ENCODE measurements at regions of chrX and their contacts with region 1.

Region 1: DNA sequence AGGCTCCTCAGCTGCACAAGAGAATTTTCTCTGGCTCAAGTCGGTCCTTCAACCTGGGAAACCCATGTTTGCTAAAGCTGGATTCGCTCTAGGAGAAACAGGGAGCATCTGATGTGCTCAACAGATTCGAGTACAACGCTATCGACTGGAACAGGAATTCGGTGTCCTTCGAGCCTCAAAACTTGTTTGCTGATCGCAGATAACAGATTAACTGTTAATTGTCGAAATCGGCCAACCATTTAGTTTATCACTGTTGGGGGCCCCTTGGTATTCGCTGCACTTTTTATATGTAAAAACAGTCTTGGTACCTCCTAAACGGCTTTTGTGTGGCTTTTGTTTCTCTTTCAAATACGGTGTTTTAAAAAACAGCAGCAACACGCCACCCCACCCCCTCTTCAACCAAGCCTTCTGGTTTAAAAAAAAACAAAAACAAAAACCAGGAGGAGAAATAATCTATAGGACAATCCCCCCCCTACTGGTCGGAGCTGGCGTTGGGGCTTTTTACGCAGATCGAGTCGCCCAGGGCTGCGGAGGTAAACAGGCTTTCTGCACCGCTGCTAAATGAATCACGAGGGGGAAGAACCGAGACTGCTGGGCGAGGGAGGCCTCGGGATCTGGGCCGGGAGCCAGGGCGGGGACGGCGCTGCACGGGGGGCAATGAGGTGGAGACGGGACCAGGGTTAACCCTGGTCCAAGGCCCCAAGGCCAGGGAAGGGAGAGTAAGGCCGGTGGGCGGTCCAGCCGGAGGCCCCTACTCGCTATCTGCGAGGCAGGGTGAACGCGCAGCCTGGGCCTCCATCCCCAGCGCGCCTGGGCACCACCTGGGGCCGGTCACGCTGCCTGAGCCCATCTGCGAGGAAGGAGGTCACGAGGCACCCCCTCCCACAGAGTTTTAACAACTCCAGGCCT is 71.7 kb upstream of the BCOR start:
- DNase-seq: peak; percentile 93
- H3K4me3 Mint-ChIP-seq: peak overlapping the region; percentile 93
- H3K27ac Mint-ChIP-seq: peak overlapping the region; percentile 93
- H3K4me1 Mint-ChIP-seq: peaks cover 44% of the 10 kb centered on the region
- H3K27me3 Mint-ChIP-seq: peaks cover under 1% of the 10 kb centered on the region

Region 2: GRCh38 chrX:39261446-39262147 is 907.9 kb before region 1 on chrX:
- intact Hi-C with region 1: loop called (anchors 10 kb)
- DNase-seq: peak; percentile 74
- H3K4me3 Mint-ChIP-seq: no peak overlapping the region
- H3K27ac Mint-ChIP-seq: peak overlapping the region; percentile 78
- H3K4me1 Mint-ChIP-seq: peaks cover 34% of the 10 kb centered on the region
- H3K27me3 Mint-ChIP-seq: no peaks in the 10 kb centered on the region

Region 3: GRCh38 chrX:39730662-39731397 is 438.6 kb before region 1 on chrX:
- intact Hi-C with region 1: loop called (anchors 5 kb)
- DNase-seq: peak; percentile 85
- H3K4me3 Mint-ChIP-seq: peak overlapping the region; percentile 28
- H3K27ac Mint-ChIP-seq: peak overlapping the region; percentile 74
- H3K4me1 Mint-ChIP-seq: peaks cover 19% of the 10 kb centered on the region
- H3K27me3 Mint-ChIP-seq: no peaks in the 10 kb centered on the region

Region 4: DNA sequence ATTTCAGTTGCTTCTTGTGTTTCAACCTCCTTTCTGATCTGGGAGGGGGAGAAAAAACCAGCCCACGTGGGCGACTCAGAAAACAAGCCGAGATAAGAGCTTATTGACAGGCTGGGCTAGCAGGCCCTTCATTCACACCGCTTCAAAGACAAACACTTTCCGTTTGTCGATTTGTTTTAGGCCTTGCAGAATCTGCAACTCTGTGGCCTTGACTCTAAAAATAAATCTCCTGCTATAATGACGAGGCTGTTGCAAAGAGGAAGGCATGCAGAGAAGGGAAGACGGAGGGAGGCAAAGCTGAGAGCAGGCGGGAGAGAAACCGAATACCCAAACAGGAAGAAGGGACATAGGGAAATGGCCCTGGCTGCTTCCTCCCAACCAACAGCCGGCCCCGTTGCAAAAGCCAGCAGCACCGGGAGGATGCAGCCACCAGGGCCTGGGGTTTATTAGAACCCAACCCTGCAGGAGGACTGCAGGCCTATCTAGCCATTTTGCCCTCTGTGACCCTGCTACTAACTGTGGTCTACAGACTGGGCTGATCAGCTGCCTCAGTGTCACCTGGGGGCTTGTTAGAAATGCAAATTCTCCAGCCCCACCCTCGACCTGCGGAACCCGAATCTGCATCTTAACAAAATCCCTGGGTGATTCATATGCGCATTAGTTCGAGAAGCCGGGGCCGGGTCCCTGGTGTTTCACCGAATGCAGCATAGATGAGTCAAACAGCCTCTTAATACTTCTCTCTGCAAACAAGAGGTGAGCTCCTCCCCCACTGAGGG is 397.2 kb before region 1 on chrX:
- intact Hi-C with region 1: loop called (anchors 5 kb)
- DNase-seq: peak; percentile 81
- H3K4me3 Mint-ChIP-seq: peak overlapping the region; percentile 82
- H3K27ac Mint-ChIP-seq: peak overlapping the region; percentile 99
- H3K4me1 Mint-ChIP-seq: peaks cover 37% of the 10 kb centered on the region
- H3K27me3 Mint-ChIP-seq: no peaks in the 10 kb centered on the region

Region 5: GRCh38 chrX:39814391-39814790 is 355.1 kb before region 1 on chrX:
- intact Hi-C with region 1: loop called (anchors 5 kb)
- DNase-seq: peak; percentile 80
- H3K4me3 Mint-ChIP-seq: no peak overlapping the region
- H3K27ac Mint-ChIP-seq: no peak overlapping the region
- H3K4me1 Mint-ChIP-seq: peaks cover 30% of the 10 kb centered on the region
- H3K27me3 Mint-ChIP-seq: no peaks in the 10 kb centered on the region

Region 6: DNA sequence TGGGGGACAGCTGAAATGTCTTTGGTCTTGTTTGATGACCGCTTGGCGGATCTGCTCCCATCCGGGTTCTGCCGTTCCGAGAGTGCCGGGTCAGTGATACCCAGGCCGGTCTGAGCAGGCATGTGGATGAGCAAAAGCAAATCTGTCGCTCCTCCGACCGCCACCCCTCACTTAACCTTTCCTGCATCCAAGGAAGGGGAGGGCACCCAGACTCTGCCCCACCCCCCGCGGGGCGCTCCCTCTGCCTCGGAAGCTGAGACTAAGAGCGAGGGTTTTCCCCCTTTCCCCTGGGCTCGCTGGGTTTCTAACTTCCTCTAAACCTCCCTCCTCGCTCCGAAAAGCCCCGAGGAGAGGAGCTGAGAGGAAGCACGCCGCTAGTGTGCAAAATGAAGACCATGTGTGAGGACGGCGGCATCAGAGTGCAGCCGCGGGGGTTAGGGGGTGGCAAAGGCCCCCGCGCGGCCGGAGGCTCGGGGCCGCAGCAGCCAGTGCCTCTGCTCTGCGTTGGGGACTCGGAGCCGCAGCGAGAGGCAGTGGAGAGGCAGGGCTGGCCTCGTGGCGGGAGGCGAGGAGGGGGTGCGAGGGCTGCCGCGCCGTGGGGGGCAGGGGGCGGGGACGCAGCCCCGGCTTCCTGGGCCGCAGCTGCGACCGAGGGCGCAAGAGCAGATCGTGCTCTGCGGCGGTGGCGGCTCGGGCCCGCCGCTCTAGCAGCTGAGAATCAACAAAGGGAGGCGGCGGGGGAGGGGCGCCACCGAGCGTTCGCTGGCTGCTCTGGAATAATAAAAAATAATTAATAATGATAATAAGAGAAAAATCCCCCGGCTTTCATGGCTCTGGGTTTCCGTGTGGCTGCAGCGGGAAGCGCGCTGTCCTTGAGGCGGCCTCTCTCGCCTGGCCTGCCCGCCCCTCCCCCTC is 15.9 kb before region 1 on chrX:
- intact Hi-C with region 1: loop called (anchors 2 kb)
- DNase-seq: peak; percentile 87
- H3K4me3 Mint-ChIP-seq: peak overlapping the region; percentile 83
- H3K27ac Mint-ChIP-seq: peak overlapping the region; percentile 80
- H3K4me1 Mint-ChIP-seq: peaks cover 12% of the 10 kb centered on the region
- H3K27me3 Mint-ChIP-seq: peaks cover 2% of the 10 kb centered on the region

Region 7: DNA sequence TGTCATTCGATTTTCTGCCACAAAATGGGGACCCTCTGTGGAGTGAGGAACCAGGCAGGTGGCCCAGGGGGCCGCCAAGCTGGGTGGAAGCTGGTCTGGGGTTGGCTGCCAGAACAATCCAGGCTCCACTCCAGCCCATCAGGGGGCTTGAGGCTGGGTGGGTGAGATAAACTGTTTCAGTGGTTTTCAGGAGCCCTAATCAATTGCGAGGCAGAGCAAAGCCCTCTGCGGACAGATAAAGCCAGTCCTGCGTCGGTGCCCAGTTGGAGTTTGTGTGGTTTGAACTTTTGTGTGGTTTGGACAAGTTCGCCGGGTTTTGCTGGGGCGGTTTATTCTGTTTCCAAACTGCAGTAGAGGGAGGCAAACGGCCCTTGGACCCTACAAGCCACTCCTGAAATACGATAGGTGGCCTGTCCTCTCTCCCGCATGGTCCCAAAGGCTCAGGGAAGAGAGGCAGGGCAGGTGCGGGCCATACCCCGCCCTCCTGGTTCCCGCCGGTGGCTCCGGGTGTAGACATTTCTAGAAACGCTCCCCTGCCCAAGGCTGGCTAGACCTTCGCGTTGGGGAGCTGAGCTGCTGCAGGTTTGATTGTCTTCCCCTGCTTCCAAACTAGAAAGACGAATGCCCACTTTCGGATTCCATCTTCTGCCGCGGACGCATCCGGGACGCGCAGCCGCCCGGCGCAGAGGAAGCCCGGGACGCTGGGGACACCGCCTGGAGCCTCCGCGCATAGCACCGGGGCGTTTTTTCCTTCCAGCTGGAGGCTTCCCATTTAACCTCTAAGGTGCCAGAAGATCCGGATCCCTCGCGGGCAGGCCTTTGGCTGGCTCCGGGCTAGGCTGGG is 97.3 kb after region 1 on chrX:
- intact Hi-C with region 1: loop called (anchors 5 kb)
- DNase-seq: peak; percentile 85
- H3K4me3 Mint-ChIP-seq: peak overlapping the region; percentile 78
- H3K27ac Mint-ChIP-seq: no peak overlapping the region
- H3K4me1 Mint-ChIP-seq: peaks cover 4% of the 10 kb centered on the region
- H3K27me3 Mint-ChIP-seq: no peaks in the 10 kb centered on the region

Measured in activated CD4-positive, alpha-beta T cell treated with anti-CD3 and anti-CD28 coated beads, Interleukin-2, amount 10 ng/mL, durations not matched to agents 24 days and 14 days (primary cell).